ENCODE measurements at regions of chr16 and their contacts with region 1.

Region 1: GRCh38 chr16:69351309-69352027 is at the start of gene TMED6:
- DNase-seq: no peak
- H3K4me3 ChIP-seq: no peak within 1 kb of the TSS
- H3K27ac ChIP-seq: no peak within 1 kb of the TSS
- H3K4me1 ChIP-seq: no peaks in the 10 kb centered on the region
- H3K27me3 ChIP-seq: no peaks in the 10 kb centered on the region
- CTCF ChIP-seq: no peak
- total RNA-seq, gene TMED6: 0.59 TPM in 1 of 2 replicates, not detected in the other

Region 2: DNA sequence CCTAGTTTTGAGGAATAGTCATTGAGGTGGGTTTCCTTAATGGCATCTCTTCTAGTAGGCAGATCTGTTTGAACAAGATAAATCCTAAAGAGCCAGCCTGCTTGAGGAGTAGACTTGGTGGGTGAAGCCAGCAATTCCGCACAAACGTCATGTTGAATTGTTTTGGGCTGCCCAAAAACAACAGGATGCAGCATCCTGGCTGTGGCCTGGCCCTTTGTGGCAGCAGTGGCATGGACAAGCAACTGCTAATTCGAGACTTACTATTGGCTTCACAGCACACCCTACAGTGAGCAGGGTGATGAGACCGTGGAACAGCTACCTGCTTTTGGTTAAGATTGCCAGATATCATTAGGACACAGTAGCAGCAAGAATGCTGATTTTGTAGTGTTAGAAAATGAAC is 49.6 kb before region 1 on chr16:
- CTCF ChIA-PET with region 1: interaction called, 13 read pairs
- POLR2A ChIA-PET with region 1: no interaction called
- intact Hi-C with region 1: no loop called
- DNase-seq: no peak
- H3K4me3 ChIP-seq: no peak overlapping the region
- H3K27ac ChIP-seq: no peak overlapping the region
- H3K4me1 ChIP-seq: no peaks in the 10 kb centered on the region
- H3K27me3 ChIP-seq: no peaks in the 10 kb centered on the region
- CTCF ChIP-seq: no peak

Region 3: GRCh38 chr16:69520800-69521602 is 169.5 kb after region 1 on chr16:
- CTCF ChIA-PET with region 1: no interaction called
- POLR2A ChIA-PET with region 1: interaction called, 11 read pairs
- intact Hi-C with region 1: no loop called
- DNase-seq: no peak
- H3K4me3 ChIP-seq: no peak overlapping the region
- H3K27ac ChIP-seq: peak overlapping the region; percentile 60
- H3K4me1 ChIP-seq: peaks cover 14% of the 10 kb centered on the region
- H3K27me3 ChIP-seq: no peaks in the 10 kb centered on the region
- CTCF ChIP-seq: no peak

Measured in PC-9 (cell line).